ENCODE measurements at regions of chr7 and their contacts with region 1.

Region 1: GRCh38 chr7:12524794-12525386 is 45.6 kb upstream of the SCIN start:
- DNase-seq: peak; percentile 24 to 60
- ATAC-seq: peak; percentile 51 to 54; a peak in 3 of 6 replicates
- H3K4me3 ChIP-seq: no peak overlapping the region
- H3K27ac ChIP-seq: no peak overlapping the region
- H3K4me1 ChIP-seq: no peaks in the 10 kb centered on the region
- CTCF ChIP-seq: peak; percentile 86
- EP300 ChIP-seq: no peak
- POLR2A ChIP-seq: no peak
- RAD21 ChIP-seq: peak; percentile 84 to 90

Region 2: GRCh38 chr7:12540850-12541249 is 16.0 kb after region 1 on chr7:
- CTCF ChIA-PET with region 1: interaction called, 16 read pairs
- POLR2A ChIA-PET with region 1: interaction called, 4 read pairs
- DNase-seq: no peak
- ATAC-seq: no peak
- H3K4me3 ChIP-seq: no peak overlapping the region
- H3K27ac ChIP-seq: no peak overlapping the region
- H3K4me1 ChIP-seq: peaks cover 13% of the 10 kb centered on the region
- CTCF ChIP-seq: no peak
- EP300 ChIP-seq: no peak
- POLR2A ChIP-seq: no peak
- RAD21 ChIP-seq: no peak

Region 3: DNA sequence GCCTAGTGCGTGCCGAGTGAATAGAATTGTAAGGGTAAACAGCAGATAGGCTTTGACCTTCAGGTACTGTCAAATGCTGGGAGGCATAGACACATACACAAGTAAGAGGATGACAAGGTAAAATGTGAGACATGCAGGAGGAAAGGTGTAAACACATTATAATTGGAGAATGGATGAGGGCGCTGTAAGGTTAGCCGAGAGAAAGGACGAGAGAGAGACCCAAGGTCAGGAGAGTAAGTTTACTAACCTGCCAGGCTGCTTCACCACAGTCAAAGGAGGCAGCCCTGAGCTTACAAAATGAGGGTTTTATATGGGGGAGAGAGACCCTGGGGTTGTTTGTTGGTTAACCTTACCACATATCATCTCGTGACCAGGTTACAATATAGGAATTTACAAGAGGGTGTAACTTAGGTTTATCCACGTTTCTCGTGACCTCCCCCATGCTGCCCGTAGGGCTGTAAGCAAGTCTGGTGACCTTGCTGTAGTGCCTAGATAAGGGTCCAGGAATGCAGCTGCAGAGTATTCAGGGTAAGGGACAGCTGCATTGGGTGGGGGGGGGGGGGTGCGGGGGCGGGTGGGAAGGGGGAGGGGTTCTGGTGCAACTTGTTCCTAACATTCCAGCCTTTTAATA is 63.5 kb after region 1 on chr7:
- CTCF ChIA-PET with region 1: interaction called, 10 read pairs
- POLR2A ChIA-PET with region 1: no interaction called
- DNase-seq: no peak
- ATAC-seq: no peak
- H3K4me3 ChIP-seq: no peak overlapping the region
- H3K27ac ChIP-seq: no peak overlapping the region
- H3K4me1 ChIP-seq: peaks cover 21% of the 10 kb centered on the region
- CTCF ChIP-seq: no peak
- EP300 ChIP-seq: no peak
- POLR2A ChIP-seq: no peak
- RAD21 ChIP-seq: no peak

Region 4: DNA sequence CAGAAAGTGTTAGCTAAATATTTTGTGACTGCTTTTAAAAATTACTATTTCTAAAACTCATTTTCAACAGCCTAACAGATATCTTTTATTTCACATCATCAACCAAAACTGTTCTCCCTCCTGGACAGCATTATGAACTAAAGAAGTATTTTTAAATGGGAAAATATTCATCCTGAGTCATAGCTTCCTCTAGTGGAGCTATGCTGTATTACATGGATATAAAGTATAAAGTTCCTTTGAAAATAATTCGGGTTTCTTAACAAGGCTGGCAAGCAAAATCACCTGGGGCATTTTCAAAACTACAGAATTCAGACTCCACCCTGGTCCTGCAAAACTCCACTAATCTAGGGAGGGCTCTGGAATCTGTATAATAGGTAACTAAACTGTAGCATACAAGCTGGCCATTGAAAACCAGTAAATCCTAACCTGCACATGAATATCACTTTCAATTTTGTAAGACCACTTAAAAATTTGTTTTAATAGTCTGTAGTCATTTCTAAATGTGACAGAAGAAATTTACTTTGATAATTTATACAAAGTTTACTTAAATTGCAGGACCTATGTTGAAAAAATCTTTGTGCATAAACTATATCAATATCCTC is 99.1 kb after region 1 on chr7:
- CTCF ChIA-PET with region 1: interaction called, 49 read pairs
- POLR2A ChIA-PET with region 1: interaction called, 4 read pairs
- DNase-seq: peak; percentile 21 to 35
- ATAC-seq: peak; percentile 34 to 68; a peak in 3 of 6 replicates
- H3K4me3 ChIP-seq: no peak overlapping the region
- H3K27ac ChIP-seq: no peak overlapping the region
- H3K4me1 ChIP-seq: peaks cover 6% of the 10 kb centered on the region; the same call in 2 of the 3 replicates
- CTCF ChIP-seq: peak; percentile 90
- EP300 ChIP-seq: no peak
- POLR2A ChIP-seq: no peak
- RAD21 ChIP-seq: peak; percentile 91 to 92

Region 5: DNA sequence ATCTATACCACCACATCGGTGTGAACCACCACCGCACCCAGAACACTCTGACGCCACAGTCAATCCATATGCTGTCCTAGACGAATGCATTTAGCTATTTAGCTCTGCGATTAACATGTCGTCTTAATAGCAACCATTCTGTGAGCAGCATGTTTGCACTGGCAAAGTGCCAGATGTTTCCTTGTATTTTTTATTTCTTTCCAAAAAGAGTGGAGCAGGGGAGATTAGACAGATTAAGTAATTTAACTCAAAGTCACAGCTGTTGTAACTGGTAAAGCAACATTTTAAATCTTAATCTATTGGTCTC is 105.6 kb after region 1 on chr7:
- CTCF ChIA-PET with region 1: interaction called, 23 read pairs
- POLR2A ChIA-PET with region 1: no interaction called
- DNase-seq: no peak
- ATAC-seq: no peak
- H3K4me3 ChIP-seq: no peak overlapping the region
- H3K27ac ChIP-seq: no peak overlapping the region
- H3K4me1 ChIP-seq: no peaks in the 10 kb centered on the region
- CTCF ChIP-seq: no peak
- EP300 ChIP-seq: no peak
- POLR2A ChIP-seq: no peak
- RAD21 ChIP-seq: no peak

Region 6: DNA sequence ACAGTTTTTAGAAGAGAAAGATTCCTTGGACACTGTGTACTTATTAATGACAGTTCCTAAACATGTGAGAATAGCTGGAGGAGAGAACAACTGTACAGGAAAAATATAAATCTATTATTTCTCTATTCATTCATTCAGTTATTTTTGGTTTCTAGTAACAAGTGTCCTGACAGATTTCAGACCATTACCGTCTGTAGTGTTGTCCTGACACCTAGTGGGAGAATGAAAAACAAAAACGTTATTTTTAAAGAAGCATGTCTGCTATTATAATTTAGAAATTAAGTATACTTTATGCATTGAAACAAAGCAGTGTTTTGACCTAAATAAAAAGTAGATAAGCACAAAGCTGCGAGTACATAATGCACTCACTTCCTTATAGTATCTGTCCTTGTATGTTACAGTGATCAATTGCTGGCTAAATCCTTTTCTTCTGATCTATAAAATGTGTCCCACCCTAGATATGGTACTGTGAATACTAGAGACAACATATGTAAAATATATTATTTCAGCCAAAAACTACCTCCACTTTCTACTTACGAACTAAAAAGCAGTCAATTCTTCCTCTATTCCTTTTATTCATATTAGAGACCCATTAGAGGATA is 738.1 kb after region 1 on chr7:
- CTCF ChIA-PET with region 1: interaction called, 15 read pairs
- POLR2A ChIA-PET with region 1: no interaction called
- DNase-seq: peak; percentile 13 to 57
- ATAC-seq: peak; percentile 64 to 83; a peak in 4 of 6 replicates
- H3K4me3 ChIP-seq: no peak overlapping the region
- H3K27ac ChIP-seq: no peak overlapping the region
- H3K4me1 ChIP-seq: no peaks in the 10 kb centered on the region
- CTCF ChIP-seq: peak; percentile 94
- EP300 ChIP-seq: no peak
- POLR2A ChIP-seq: no peak
- RAD21 ChIP-seq: peak; percentile 96 to 97

Measured in A549 (cell line).